Ascending aorta (tissue), 2 donors: ENCODE measurements at regions of chr20 and their contacts with region 1.

Region 1: DNA sequence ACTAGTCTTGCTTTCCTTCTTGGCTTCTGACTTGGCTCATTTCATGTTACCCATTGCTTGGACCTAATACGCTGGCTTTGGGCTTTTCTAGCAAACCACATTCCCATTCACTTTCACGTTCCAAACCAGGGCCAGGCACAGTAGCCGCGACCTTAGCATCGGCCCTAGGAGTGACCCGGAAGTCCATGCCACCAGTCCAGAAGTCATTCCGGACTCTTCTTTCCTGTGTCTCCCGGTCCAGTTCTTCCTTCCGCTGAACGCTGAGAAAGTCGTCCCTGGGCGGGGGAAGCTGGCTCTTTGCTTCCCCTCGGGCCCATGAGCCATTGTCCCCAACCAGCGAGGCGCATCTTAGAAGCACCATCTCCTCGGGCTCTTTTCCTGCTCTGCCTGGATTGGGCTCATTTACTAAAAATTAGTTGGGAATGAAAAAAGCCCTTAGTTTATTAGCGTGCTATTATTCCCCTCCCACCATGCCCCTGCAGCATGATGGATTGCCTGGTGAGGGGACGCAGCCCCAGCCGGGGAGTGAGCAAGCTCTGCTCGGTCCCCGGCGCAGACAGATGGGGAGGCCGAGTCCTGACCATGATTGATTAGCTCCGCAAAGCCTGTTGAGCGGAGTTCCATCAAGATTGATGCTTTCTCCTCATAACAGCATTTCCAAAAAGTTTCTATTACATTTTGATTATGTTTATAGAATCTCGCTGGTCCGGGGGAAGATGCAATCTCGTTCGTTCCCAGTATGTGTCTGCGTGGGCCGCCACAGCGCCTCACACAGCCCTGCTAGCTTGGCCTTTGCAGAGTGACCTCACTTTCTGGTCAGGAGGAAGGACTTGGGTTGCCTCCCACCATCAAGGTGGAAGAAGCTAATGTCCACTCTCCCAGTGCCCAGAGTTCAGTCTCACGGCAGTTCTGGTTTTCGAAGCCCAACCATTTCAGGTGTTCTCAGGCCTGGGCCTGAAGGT is 115.1 kb upstream of the TOP1 start:
- DNase-seq: no peak
- H3K4me3 ChIP-seq: no peak overlapping the region
- H3K27ac ChIP-seq: no peak overlapping the region
- H3K4me1 ChIP-seq: no peaks in the 10 kb centered on the region
- H3K27me3 ChIP-seq: no peaks in the 10 kb centered on the region
- CTCF ChIP-seq: no peak

Region 2: GRCh38 chr20:40851051-40851450 is 62.5 kb before region 1 on chr20:
- intact Hi-C with region 1: loop called (anchors 10 kb)
- DNase-seq: no peak
- H3K4me3 ChIP-seq: no peak overlapping the region
- H3K27ac ChIP-seq: no peak overlapping the region
- H3K4me1 ChIP-seq: no peaks in the 10 kb centered on the region
- H3K27me3 ChIP-seq: no peaks in the 10 kb centered on the region
- CTCF ChIP-seq: no peak